Tibial artery (tissue), 4 donors: ENCODE measurements at regions of chr13 and their contacts with region 1.

Region 1: DNA sequence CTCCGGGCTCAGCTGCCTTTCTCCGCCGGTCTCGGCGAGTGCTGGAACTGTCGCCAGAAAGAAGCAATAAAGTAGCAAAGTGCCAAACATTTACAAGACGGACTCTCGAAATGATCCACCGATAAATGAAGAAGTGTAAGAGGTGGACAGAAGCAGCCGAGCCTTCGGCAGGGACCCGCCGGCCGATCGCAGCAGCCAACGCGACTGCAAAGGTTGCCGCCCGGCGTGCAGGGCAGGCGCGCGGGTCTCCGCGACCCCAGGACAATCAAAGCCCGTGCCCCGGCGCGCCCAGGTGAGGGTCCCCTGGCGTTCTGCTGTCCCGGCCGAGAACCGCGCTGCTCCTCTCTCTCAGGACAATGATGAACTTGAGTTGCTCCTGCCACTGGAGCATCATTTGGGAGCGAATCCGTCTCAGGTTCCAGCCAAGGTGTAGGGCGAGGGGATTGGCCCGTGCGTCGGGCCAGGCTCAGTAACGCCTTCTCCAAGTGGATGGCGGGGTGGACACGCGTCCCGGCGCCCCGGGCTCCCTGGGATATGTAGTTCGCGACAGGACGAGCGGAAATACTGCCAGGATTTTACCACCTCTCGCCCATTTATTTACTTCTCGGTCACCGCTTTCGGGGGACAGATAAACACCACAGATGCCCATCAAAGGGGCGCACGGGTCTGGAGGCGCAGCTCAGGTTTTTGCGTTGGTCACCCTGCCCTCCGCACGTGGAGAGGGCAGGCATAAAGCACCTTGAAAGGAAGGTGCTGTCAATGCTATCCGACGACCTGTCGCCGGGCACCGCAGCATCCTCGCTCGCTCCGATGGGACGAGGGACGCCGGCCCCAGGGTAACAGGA is at the starts of genes BIVM and POGLUT2:
- DNase-seq: peak; percentile 92 to 94
- H3K4me3 ChIP-seq: peak within 1 kb of the TSS; percentile 66 to 73
- H3K27ac ChIP-seq: peak within 1 kb of the TSS; percentile 72 to 87
- H3K4me1 ChIP-seq: peaks cover 0 to 27% (median 7%) of the 10 kb centered on the region in 4 donors
- H3K27me3 ChIP-seq: no peaks in the 10 kb centered on the region
- CTCF ChIP-seq: no peak

Region 2: GRCh38 chr13:102657630-102658029 is 141.2 kb before region 1 on chr13:
- intact Hi-C with region 1: loop called (anchors 10 kb)
- DNase-seq: no peak
- H3K4me3 ChIP-seq: no peak overlapping the region
- H3K27ac ChIP-seq: no peak overlapping the region
- H3K4me1 ChIP-seq: peaks cover 0 to 2% (median 0%) of the 10 kb centered on the region in 4 donors
- H3K27me3 ChIP-seq: no peaks in the 10 kb centered on the region
- CTCF ChIP-seq: peak in 1 of 2 experiments; percentile 9

Region 3: GRCh38 chr13:102845630-102846260 is 46.9 kb after region 1 on chr13 and contains the start of gene ERCC5:
- intact Hi-C with region 1: loop called (anchors 10 kb)
- DNase-seq: peak; percentile 91 to 94
- H3K4me3 ChIP-seq: peak within 1 kb of the TSS; percentile 66 to 88
- H3K27ac ChIP-seq: peak within 1 kb of the TSS; percentile 84 to 95
- H3K4me1 ChIP-seq: peaks cover 0 to 20% (median 12%) of the 10 kb centered on the region in 4 donors
- H3K27me3 ChIP-seq: no peaks in the 10 kb centered on the region
- CTCF ChIP-seq: no peak

Region 4: DNA sequence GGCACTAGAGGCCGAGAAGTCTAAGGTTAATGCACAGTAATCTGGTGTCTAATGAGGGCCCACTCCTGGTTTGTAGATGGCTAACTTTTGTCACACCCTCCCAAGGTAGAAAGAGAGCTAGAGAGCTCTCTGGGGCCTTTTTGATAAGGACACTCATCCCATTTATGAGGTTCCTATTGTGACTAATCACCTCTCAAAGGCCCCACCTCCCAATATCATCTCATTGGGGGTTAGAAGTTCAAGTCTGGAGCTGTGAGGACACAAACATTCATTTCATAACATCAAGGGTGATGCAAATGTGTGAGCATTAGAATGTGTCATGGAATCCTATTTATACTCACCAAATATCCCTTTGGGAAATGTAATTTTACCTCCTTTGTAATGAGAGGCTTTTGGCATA is 346.6 kb after region 1 on chr13:
- intact Hi-C with region 1: no loop called
- DNase-seq: no peak
- H3K4me3 ChIP-seq: no peak overlapping the region
- H3K27ac ChIP-seq: no peak overlapping the region
- H3K4me1 ChIP-seq: no peaks in the 10 kb centered on the region
- H3K27me3 ChIP-seq: no peaks in the 10 kb centered on the region
- CTCF ChIP-seq: no peak